Ascending aorta (tissue), 2 donors: ENCODE measurements at regions of chr5 and their contacts with region 1.

Region 1: DNA sequence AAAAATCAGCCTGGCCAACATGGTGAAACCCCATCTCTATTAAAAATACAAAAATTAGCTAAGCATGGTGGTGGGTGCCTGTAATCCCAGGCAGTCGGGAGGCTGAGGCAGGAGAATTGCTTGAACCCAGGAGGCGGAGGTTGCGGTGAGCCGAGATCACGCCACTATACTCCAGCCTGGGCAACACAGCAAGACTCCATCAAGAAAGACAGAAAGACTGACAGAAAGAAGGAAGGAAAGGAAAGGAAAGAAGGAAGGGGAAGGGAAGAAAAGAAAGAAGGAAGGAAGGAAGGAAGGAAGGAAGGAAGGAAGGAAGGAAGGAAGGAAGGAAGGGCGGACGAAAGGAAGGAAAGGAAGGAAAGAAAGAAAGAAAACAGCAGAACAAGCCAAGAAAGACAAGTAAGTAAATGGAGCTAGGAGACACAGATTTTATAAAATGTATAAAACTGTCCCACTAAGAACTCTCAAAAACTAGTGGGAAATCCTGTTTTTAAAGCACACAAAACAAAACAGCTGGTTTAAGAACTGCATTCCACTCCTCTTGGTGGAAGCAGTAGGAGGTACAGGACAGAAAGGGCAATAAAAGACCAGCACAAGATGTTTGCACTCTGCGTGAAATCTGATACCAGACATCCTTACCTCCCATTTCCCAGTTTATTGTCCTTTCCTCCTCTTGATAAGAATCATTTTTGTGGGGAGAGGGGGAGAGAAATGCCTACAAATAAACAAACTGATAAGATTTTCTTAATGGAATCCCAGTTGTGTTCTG is 46.7 kb downstream of the MYO10 start:
- DNase-seq: no peak
- H3K4me3 ChIP-seq: no peak overlapping the region
- H3K27ac ChIP-seq: no peak overlapping the region
- H3K4me1 ChIP-seq: peaks cover 0 to 9% of the 10 kb centered on the region in 2 donors
- H3K27me3 ChIP-seq: no peaks in the 10 kb centered on the region
- CTCF ChIP-seq: no peak

Region 2: DNA sequence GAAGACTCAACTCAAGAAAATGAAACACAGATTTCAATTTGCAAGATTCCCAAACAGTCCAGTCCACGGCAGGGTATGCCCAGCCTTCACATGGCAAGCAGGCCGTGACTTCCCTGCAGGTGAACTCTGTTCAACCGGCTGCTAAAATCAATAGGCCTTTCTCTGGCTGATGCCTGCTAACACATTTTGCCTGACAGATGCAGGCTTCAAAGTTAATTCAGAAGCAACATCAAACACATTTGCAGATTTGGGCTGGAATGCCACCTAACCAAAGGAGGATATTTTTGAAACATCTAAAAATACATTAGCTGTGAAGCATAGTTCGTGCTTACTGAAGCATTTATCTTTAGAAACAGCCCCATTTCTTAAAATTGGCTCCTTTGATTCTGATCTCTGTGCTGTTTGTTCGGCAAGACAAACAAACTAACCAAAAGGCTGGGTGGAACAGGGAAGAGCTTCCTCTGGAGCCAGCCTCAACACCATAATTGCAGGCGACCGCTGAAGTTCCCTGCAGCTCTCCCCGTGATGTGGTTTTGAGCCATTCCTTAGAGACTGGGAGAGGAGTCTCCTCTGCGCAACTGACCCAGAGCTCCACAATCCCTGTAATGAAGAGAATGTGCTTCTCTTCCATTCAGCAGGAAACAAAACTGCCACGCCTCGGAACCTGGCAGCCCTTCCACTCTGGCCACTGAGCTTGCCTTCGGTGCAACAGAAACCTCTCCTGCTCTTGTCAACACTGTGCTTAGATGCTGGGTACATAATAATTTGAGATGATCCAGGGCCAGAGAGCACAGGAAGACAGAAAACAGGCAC is 79.8 kb before region 1 on chr5:
- intact Hi-C with region 1: loop called (anchors 10 kb)
- DNase-seq: no peak
- H3K4me3 ChIP-seq: no peak overlapping the region
- H3K27ac ChIP-seq: no peak overlapping the region
- H3K4me1 ChIP-seq: peaks cover 0 to 4% of the 10 kb centered on the region in 2 donors
- H3K27me3 ChIP-seq: no peaks in the 10 kb centered on the region
- CTCF ChIP-seq: no peak

Region 3: DNA sequence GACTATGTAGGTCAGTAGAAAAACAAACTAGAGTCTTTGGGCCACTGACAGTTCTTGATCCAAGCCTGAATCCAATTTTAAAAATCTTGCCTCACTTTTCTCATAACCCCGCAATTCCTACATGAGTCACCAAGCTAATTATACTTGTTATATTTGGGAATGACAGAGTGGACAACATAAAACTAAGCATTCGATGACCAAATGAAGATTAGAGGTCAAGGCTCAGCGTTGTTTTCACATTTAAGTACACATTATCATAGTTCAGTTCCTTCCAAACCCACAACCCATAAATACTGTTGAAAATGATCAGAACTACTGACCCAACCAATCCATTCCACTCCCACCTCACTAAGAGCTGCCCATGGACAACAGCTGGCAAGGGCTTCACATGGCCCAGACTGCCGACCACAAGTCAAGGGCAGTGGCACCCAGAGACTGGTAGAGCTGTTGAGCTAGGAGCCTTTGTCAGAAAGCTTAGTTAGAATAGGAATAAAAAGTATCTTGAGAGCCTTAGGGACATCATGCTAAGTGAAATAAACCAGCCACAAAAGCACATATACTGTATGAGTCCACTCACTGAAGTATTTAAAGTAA is 17.5 kb before region 1 on chr5:
- intact Hi-C with region 1: loop called (anchors 2 kb)
- DNase-seq: no peak
- H3K4me3 ChIP-seq: no peak overlapping the region
- H3K27ac ChIP-seq: peak overlapping the region; percentile 75 to 81
- H3K4me1 ChIP-seq: peaks cover 4 to 5% of the 10 kb centered on the region in 2 donors
- H3K27me3 ChIP-seq: no peaks in the 10 kb centered on the region
- CTCF ChIP-seq: no peak

Region 4: DNA sequence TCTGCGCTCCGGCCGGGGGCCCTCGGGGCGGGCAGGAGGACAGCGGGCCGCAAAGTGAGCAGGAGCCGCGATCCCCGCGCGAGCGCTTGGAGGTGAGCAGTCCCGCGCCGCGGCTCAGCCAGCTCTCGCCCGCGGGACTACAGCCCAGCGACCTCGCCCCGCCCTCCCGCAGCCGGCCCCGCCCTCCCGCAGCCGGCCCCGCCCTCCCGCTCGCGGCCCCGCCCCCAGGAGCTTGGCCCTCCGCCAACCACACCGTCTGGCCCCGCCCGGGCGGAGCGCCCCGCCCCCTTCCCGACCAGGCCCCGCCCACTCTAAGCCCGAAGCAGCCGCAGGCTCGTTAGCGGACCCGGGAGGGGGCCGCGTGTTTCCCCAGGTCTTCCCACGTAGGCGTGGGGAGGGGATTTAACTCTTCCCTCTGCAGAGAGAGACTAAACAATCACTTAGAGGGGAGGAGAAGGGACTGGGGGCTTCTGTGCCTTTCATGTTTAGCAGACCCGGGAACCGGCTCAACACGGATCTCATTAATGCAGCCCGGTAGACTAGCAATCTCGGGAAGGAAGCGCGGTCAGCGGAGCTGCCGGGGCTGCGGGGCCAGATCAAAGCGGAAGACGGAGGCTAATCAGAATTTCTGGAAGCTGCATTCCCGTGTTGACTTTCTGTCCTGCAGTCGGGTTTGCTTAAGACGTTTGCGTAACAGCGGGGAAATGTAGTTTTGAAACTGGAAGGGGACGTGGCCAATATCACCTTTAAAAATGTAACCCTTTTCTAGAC is 46.9 kb after region 1 on chr5 and contains the start of gene MYO10:
- intact Hi-C with region 1: loop called (anchors 5 kb)
- DNase-seq: peak in 1 of 2 donors; percentile 79
- H3K4me3 ChIP-seq: peak within 1 kb of the TSS; percentile 56 to 88
- H3K27ac ChIP-seq: peak within 1 kb of the TSS; percentile 55 to 56
- H3K4me1 ChIP-seq: no peaks in the 10 kb centered on the region
- H3K27me3 ChIP-seq: no peaks in the 10 kb centered on the region
- CTCF ChIP-seq: no peak
- total RNA-seq, gene MYO10: 20.0 TPM